GM13976 (cell line): ENCODE measurements at regions of chr11 and their contacts with region 1.

Region 1: DNA sequence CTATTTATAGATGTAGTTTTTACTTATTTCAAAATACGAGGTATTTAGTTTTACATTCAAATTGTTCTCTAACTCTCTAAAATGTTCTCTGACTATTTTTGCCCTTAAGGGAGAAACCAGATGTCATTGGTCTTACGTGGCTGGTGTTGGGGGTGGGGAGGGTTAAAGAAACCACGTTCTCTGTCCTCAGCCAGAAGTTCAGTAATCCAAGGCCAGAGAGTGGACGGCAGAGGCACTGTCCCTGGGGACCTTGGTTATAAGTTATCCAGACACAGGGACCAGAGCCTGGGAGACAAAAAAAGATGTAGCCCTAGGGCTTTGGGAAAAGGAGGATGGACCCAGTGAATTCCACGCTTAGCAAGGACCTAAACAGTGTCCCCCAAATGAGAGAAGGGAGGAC is 706 bp upstream of the OR51E1 start:
- DNase-seq: no peak
- CTCF ChIP-seq: no peak

Region 2: DNA sequence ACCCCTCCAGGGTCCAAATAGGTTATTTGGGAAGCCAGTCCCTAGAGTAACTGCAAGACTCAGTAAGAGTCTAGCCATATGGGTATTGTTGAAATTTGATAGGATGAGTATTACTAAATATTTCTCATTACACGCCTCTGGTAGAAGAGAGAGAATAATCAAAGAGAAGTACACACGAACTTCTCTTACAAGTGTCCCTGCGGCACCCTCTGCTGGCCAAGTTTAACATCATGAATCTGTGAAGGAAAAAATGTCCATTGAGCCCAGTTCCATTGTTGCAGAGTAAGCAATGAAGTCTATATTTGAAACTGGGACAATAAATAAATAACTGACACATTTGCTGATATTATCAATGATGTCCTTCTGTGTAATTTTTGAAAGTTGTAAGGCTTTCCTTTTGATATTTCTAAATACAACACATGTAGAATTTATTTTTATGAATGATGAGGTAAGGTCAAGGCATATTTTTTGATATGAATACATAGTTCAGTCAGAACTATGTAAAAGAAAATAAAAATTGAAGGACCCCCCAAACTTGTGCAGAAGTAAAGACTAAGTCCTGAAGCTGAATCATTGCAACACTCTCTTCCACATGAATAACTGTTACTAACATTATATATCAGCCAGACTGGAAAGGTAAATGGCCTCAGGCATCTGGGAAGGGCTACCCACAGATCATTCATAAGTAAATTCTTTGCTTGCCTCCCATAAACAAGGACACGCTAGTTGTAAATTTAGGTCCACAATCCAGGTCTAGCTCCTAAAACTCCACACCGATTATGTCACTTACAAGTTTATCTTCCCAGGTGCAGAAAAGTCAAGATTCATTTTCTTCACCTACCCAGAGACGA is 361.6 kb after region 1 on chr11:
- in situ Hi-C with region 1: loop called (anchors 10 kb)
- DNase-seq: peak; percentile 16
- CTCF ChIP-seq: peak; percentile 61